ENCODE measurements at regions of chr3 and their contacts with region 1.

Region 1: GRCh38 chr3:136802481-136802996 is 16.4 kb upstream of the SLC35G2 start:
- DNase-seq: no peak

Region 2: GRCh38 chr3:136955813-136956212 is 153.3 kb after region 1 on chr3:
- intact Hi-C with region 1: no loop called
- DNase-seq: no peak

Region 3: GRCh38 chr3:137148917-137149316 is 346.4 kb after region 1 on chr3:
- intact Hi-C with region 1: loop called in 1 of 2 experiments (anchors 5 kb)
- DNase-seq: no peak

Measured in posterior vena cava (tissue), 2 donors.